ENCODE measurements at regions of chr9 and their contacts with region 1.

Region 1: GRCh38 chr9:72271613-72272478 is 93.2 kb downstream of the ZFAND5 start:
- DNase-seq: peak; percentile 48
- H3K4me3 ChIP-seq: no peak overlapping the region
- H3K27ac ChIP-seq: no peak overlapping the region
- H3K4me1 ChIP-seq: no peaks in the 10 kb centered on the region
- H3K27me3 ChIP-seq: peaks cover 2 to 4% of the 10 kb centered on the region in 2 experiments
- CTCF ChIP-seq: peak; percentile 74 to 79
- POLR2A ChIP-seq: no peak

Region 2: DNA sequence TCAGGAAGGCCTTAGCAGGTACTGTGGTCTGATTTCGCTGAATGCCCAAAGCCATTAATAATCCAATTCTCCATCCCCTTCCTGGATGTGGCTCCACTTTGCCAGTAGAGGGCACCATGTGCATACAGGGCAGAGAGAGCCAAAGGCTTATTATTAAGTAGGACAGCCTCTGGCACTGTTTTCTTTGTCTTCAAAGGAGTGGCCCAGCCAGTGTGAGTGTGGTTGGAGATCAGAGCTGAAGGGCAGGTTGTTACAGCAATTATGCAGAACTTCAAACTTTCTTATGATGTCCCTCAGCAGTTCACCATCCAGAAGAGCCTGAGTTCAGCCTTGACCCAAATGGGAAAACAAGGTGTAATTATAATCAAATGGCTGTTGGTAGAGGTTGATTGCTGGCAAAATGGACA is 464.9 kb before region 1 on chr9:
- CTCF ChIA-PET with region 1: interaction called, 7 read pairs
- POLR2A ChIA-PET with region 1: no interaction called
- dilution Hi-C with region 1: no loop called
- intact Hi-C with region 1: loop called (anchors 1 kb)
- DNase-seq: peak; percentile 74
- H3K4me3 ChIP-seq: no peak overlapping the region
- H3K27ac ChIP-seq: no peak overlapping the region
- H3K4me1 ChIP-seq: no peaks in the 10 kb centered on the region
- H3K27me3 ChIP-seq: peaks cover 0 to 3% of the 10 kb centered on the region in 2 experiments
- CTCF ChIP-seq: peak; percentile 77 to 85
- POLR2A ChIP-seq: no peak

Region 3: GRCh38 chr9:72038890-72039410 is 232.9 kb before region 1 on chr9:
- CTCF ChIA-PET with region 1: interaction called, 237 read pairs
- POLR2A ChIA-PET with region 1: no interaction called
- dilution Hi-C with region 1: no loop called
- intact Hi-C with region 1: loop called (anchors 1 kb)
- DNase-seq: peak; percentile 74
- H3K4me3 ChIP-seq: no peak overlapping the region
- H3K27ac ChIP-seq: no peak overlapping the region
- H3K4me1 ChIP-seq: no peaks in the 10 kb centered on the region
- H3K27me3 ChIP-seq: no peaks in the 10 kb centered on the region
- CTCF ChIP-seq: peak; percentile 85 to 91
- POLR2A ChIP-seq: no peak

Region 4: GRCh38 chr9:72203205-72203803 is 68.5 kb before region 1 on chr9:
- CTCF ChIA-PET with region 1: interaction called, 11 read pairs
- POLR2A ChIA-PET with region 1: no interaction called
- dilution Hi-C with region 1: no loop called
- intact Hi-C with region 1: loop called (anchors 1 kb)
- DNase-seq: peak; percentile 24
- H3K4me3 ChIP-seq: no peak overlapping the region
- H3K27ac ChIP-seq: no peak overlapping the region
- H3K4me1 ChIP-seq: no peaks in the 10 kb centered on the region
- H3K27me3 ChIP-seq: peaks cover 0 to 3% of the 10 kb centered on the region in 2 experiments
- CTCF ChIP-seq: peak; percentile 29 to 55
- POLR2A ChIP-seq: no peak

Region 5: DNA sequence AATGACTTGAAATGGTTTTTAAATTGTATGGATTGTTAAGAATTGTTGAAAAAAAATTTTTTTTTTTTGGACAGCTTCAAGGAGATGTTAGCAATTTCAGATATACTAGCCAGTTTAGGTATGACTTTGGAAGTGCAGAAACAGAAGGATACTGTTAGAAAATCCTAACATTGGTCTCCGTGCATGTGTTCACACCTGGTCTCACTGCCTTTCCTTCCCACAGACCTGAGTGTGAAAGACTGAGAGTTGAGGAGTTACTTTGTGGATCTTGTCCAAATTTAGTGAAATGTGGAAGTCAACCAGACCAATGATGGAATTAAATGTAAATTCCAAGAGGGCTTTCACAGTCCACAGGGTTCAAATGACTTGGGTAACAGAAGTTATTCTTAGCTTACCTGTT is 20.3 kb before region 1 on chr9:
- CTCF ChIA-PET with region 1: interaction called, 15 read pairs
- POLR2A ChIA-PET with region 1: no interaction called
- dilution Hi-C with region 1: no loop called
- intact Hi-C with region 1: no loop called
- DNase-seq: no peak
- H3K4me3 ChIP-seq: no peak overlapping the region
- H3K27ac ChIP-seq: no peak overlapping the region
- H3K4me1 ChIP-seq: no peaks in the 10 kb centered on the region
- H3K27me3 ChIP-seq: peaks cover 6% of the 10 kb centered on the region in 2 experiments
- CTCF ChIP-seq: no peak
- POLR2A ChIP-seq: no peak

Region 6: GRCh38 chr9:72256931-72257330 is 14.9 kb before region 1 on chr9:
- CTCF ChIA-PET with region 1: interaction called, 17 read pairs
- POLR2A ChIA-PET with region 1: no interaction called
- dilution Hi-C with region 1: no loop called
- intact Hi-C with region 1: no loop called
- DNase-seq: no peak
- H3K4me3 ChIP-seq: no peak overlapping the region
- H3K27ac ChIP-seq: no peak overlapping the region
- H3K4me1 ChIP-seq: no peaks in the 10 kb centered on the region
- H3K27me3 ChIP-seq: peaks cover 0 to 4% of the 10 kb centered on the region in 2 experiments
- CTCF ChIP-seq: no peak
- POLR2A ChIP-seq: no peak

Region 7: DNA sequence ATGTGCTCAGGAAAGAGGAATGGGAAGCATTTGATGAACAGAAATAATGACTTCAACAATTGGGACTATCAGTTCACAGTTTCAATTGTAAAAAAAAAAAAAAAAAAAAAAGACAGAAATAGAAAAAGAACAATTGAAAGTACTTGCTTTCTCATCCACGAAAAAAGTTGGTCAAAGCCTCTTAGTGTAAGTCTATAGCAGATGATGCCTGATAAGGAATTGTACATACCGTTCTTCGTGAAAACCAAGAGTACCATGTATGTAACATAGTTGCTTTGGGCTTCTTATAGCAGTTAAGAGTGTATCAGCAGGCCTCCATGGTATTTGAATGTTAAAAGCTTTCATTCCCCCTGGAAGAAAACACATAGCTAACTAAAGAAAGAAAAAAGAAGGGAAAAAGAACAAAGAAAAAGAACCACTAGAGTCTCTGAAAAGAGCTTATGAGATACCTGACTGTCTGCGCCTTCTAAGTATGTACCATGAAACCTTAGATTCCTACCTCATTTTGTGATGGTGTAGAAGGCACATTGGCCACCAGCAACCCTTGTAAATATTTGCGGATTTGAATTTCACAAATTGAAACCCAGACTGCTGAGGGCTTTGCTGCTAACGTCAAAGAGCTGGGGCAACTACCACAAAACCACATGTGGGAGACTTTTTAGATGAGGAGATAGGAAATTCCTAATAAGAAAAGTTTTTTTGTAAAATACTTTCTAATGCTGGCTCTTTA is 324.8 kb after region 1 on chr9:
- CTCF ChIA-PET with region 1: no interaction called
- POLR2A ChIA-PET with region 1: no interaction called
- dilution Hi-C with region 1: no loop called
- intact Hi-C with region 1: no loop called
- DNase-seq: no peak
- H3K4me3 ChIP-seq: no peak overlapping the region
- H3K27ac ChIP-seq: no peak overlapping the region
- H3K4me1 ChIP-seq: no peaks in the 10 kb centered on the region
- H3K27me3 ChIP-seq: no peaks in the 10 kb centered on the region
- CTCF ChIP-seq: no peak
- POLR2A ChIP-seq: no peak

Measured in endothelial cell of umbilical vein (primary cell).